ENCODE measurements at regions of chr9 and their contacts with region 1.

Region 1: GRCh38 chr9:137302176-137302994 is at the start of gene NRARP:
- DNase-seq: peak; percentile 92 to 96
- H3K4me3 ChIP-seq: peak within 1 kb of the TSS; percentile 99
- H3K4me3 Mint-ChIP-seq: peak within 1 kb of the TSS; percentile 90
- H3K27ac Mint-ChIP-seq: peak within 1 kb of the TSS; percentile 84
- H3K4me1 ChIP-seq: peaks cover 16% of the 10 kb centered on the region
- H3K4me1 Mint-ChIP-seq: no peaks in the 10 kb centered on the region
- H3K27me3 ChIP-seq: no peaks in the 10 kb centered on the region
- H3K27me3 Mint-ChIP-seq: no peaks in the 10 kb centered on the region
- CTCF ChIP-seq: peak; percentile 71 to 77
- total RNA-seq, gene NRARP: 22.1 and 24.7 TPM in 2 replicates

Region 2: DNA sequence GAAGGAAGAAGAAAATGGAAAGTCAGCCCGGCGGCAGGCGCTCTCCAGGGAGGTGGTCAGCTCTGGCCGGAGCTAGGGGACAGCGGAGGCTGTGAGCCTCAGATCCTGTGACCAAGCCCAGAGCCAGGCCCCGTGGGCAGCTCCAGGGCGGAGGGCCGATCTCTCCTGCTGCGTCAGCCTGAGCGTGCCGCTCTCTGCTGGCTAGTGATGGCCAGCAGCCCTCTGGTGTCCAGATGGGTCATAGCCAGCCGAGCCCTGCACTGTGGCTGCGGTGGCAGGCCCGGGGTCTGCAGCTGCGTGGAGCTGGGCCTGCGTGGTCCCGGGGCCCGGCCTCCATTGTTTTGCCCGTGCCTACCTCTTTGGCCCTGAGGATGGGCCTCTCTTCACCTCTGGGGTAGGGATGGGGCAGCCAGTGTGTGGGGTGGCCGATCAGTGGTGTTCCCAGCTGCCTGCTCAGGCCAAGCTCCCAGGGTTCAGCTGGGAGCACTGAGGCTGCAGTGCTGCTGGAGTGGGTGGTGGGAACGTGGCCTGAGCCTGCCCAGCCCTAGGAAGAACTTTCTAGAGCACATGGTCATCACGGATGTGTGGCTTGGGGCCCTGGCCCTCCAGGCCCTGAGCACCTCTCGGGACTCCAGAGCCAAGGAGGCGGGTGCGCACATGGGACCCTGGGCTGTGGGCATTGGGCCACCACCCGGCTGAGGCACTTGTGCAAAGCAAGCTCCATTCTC is 16.8 kb after region 1 on chr9:
- CTCF ChIA-PET with region 1: interaction called, 10 read pairs
- POLR2A ChIA-PET with region 1: interaction called, 5 read pairs
- intact Hi-C with region 1: no loop called
- DNase-seq: peak; percentile 53 to 54
- H3K4me3 ChIP-seq: no peak overlapping the region
- H3K4me3 Mint-ChIP-seq: no peak overlapping the region
- H3K27ac Mint-ChIP-seq: no peak overlapping the region
- H3K4me1 ChIP-seq: peaks cover 19% of the 10 kb centered on the region
- H3K4me1 Mint-ChIP-seq: no peaks in the 10 kb centered on the region
- H3K27me3 ChIP-seq: no peaks in the 10 kb centered on the region
- H3K27me3 Mint-ChIP-seq: no peaks in the 10 kb centered on the region
- CTCF ChIP-seq: peak; percentile 30 to 56

Measured in Caco-2 (cell line).